Calu3 (cell line): ENCODE measurements at regions of chr1 and their contacts with region 1.

Region 1: GRCh38 chr1:165717918-165718515 is 19.7 kb upstream of the ALDH9A1 start:
- DNase-seq: peak; percentile 57
- H3K4me3 Mint-ChIP-seq: no peak overlapping the region
- H3K27ac Mint-ChIP-seq: no peak overlapping the region
- H3K4me1 Mint-ChIP-seq: no peaks in the 10 kb centered on the region
- H3K27me3 Mint-ChIP-seq: no peaks in the 10 kb centered on the region
- CTCF ChIP-seq: peak; percentile 43

Region 2: DNA sequence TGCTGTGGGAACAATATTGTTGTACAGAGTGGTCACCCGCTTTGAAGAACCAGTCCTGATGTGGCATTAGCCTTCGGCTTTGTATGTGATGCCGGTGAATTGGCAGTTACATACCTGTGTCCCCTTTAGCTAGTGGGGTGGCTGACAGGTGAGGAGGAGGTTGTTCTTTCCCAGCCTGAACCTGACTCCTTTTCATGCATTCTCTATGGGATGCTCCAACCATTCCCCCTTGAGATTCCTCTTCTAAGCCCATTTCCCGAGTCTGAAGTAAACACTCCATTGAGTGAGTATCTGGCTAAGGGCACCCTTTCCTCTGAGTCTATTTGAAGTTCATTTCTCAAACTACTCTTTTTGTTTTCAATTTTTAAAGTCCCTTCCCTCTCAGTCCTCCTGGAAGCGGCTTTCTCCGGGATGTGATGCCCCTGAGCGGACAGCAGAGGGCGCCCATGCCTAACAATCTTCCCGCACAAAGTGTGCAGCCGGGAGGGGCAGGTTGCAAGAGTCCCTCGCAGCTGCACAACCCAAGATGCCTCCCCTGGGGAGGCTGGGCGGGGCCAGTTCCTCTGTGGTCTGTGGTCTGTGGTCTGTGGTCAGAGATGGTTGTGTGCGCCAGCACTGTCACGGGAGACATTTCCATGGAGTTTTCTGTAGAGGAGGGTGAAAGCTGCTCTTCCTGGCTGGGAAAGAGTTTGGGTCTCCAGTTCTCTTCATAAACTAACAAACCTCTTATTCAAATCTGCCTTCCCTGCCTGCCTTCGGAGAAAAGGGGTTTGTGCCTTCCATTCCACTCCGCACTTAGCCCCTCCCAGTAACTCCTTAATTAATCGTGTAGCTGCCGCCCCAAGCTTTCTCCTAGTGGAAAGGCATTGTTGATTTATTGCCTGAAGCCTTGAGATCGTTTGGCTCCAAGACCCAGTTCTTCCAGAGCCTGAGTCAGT is 325.1 kb before region 1 on chr1:
- CTCF ChIA-PET with region 1: no interaction called
- intact Hi-C with region 1: loop called (anchors 5 kb)
- DNase-seq: peak; percentile 88
- H3K4me3 Mint-ChIP-seq: no peak overlapping the region
- H3K27ac Mint-ChIP-seq: no peak overlapping the region
- H3K4me1 Mint-ChIP-seq: peaks cover 7% of the 10 kb centered on the region
- H3K27me3 Mint-ChIP-seq: peaks cover 98% of the 10 kb centered on the region
- CTCF ChIP-seq: peak; percentile 93

Region 3: DNA sequence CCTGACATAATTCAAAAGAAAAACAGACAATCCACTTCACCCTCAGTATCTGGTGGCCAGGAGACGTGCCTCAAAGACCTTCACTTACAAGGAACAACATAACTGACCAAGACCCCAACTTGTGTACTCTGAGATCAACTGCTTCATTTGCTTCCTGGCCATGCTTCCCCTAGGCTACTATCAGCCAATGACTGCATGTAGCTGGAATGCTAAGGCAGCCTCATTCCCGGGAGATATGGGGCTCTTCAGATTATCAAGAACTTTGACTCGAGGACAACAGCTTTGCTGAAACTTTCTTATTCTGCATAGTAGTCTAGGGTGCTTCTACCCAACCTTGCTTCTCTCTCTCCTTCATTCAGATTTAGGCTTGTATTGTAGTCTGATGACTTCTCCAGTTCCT is 97.7 kb after region 1 on chr1:
- CTCF ChIA-PET with region 1: no interaction called
- intact Hi-C with region 1: no loop called
- DNase-seq: no peak
- H3K4me3 Mint-ChIP-seq: no peak overlapping the region
- H3K27ac Mint-ChIP-seq: no peak overlapping the region
- H3K4me1 Mint-ChIP-seq: peaks cover 9% of the 10 kb centered on the region
- H3K27me3 Mint-ChIP-seq: no peaks in the 10 kb centered on the region
- CTCF ChIP-seq: no peak

Region 4: GRCh38 chr1:165871311-165872067 is 153.5 kb after region 1 on chr1:
- CTCF ChIA-PET with region 1: no interaction called
- intact Hi-C with region 1: loop called (anchors 1 kb)
- DNase-seq: peak; percentile 67
- H3K4me3 Mint-ChIP-seq: peak overlapping the region; percentile 7
- H3K27ac Mint-ChIP-seq: peak overlapping the region; percentile 27
- H3K4me1 Mint-ChIP-seq: peaks cover 71% of the 10 kb centered on the region
- H3K27me3 Mint-ChIP-seq: no peaks in the 10 kb centered on the region
- CTCF ChIP-seq: peak; percentile 21

Region 5: GRCh38 chr1:165914136-165914798 is 196.2 kb after region 1 on chr1:
- CTCF ChIA-PET with region 1: no interaction called
- intact Hi-C with region 1: loop called (anchors 1 kb)
- DNase-seq: peak; percentile 75
- H3K4me3 Mint-ChIP-seq: no peak overlapping the region
- H3K27ac Mint-ChIP-seq: no peak overlapping the region
- H3K4me1 Mint-ChIP-seq: peaks cover 22% of the 10 kb centered on the region
- H3K27me3 Mint-ChIP-seq: no peaks in the 10 kb centered on the region
- CTCF ChIP-seq: peak; percentile 72

Region 6: GRCh38 chr1:165994107-165994506 is 276.1 kb after region 1 on chr1:
- CTCF ChIA-PET with region 1: no interaction called
- intact Hi-C with region 1: no loop called
- DNase-seq: no peak
- H3K4me3 Mint-ChIP-seq: no peak overlapping the region
- H3K27ac Mint-ChIP-seq: no peak overlapping the region
- H3K4me1 Mint-ChIP-seq: no peaks in the 10 kb centered on the region
- H3K27me3 Mint-ChIP-seq: peaks cover 37% of the 10 kb centered on the region
- CTCF ChIP-seq: no peak

Region 7: DNA sequence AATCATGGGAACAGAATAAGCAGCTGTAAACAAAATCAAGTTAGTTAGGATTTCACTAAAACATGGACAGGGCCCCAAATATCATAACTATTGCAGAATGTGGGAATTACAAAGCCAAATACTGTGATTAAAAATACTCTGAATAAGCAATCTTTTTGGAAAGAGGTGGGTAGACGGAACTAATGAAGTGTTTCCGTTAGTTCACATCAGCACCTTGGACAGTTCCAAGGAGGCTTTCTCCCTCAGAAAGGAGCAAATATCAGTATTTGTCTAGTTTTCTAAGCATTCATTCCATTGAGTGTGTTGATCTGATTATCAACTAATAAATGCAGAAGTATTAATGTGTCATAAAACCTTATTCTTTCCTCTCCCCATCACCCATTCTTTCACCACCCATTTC is 351.4 kb after region 1 on chr1:
- CTCF ChIA-PET with region 1: no interaction called
- intact Hi-C with region 1: no loop called
- DNase-seq: no peak
- H3K4me3 Mint-ChIP-seq: no peak overlapping the region
- H3K27ac Mint-ChIP-seq: no peak overlapping the region
- H3K4me1 Mint-ChIP-seq: no peaks in the 10 kb centered on the region
- H3K27me3 Mint-ChIP-seq: no peaks in the 10 kb centered on the region
- CTCF ChIP-seq: no peak

Region 8: DNA sequence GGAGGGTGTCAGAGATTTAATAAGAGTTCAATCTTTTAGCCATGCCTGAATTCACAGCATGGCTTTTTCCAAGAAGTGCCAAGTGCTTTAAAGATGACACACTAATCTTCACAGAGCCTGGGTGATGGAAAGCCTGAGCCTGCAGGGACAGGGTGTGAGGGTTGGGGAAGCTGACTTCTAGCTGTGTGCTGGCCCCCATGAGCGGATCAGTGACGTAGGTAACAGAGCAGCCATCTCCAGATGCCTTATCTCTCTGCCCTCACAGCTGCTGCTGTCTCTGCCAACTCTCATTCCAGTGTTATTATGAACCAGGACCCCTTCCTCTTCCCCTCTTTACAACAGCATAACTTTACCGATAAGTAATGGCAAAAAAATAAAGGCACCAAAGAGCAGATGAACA is 418.2 kb after region 1 on chr1:
- CTCF ChIA-PET with region 1: no interaction called
- intact Hi-C with region 1: no loop called
- DNase-seq: no peak
- H3K4me3 Mint-ChIP-seq: no peak overlapping the region
- H3K27ac Mint-ChIP-seq: no peak overlapping the region
- H3K4me1 Mint-ChIP-seq: no peaks in the 10 kb centered on the region
- H3K27me3 Mint-ChIP-seq: no peaks in the 10 kb centered on the region
- CTCF ChIP-seq: no peak